Right ventricle myocardium inferior (tissue), 1 donor: ENCODE measurements at regions of chr9 and their contacts with region 1.

Region 1: DNA sequence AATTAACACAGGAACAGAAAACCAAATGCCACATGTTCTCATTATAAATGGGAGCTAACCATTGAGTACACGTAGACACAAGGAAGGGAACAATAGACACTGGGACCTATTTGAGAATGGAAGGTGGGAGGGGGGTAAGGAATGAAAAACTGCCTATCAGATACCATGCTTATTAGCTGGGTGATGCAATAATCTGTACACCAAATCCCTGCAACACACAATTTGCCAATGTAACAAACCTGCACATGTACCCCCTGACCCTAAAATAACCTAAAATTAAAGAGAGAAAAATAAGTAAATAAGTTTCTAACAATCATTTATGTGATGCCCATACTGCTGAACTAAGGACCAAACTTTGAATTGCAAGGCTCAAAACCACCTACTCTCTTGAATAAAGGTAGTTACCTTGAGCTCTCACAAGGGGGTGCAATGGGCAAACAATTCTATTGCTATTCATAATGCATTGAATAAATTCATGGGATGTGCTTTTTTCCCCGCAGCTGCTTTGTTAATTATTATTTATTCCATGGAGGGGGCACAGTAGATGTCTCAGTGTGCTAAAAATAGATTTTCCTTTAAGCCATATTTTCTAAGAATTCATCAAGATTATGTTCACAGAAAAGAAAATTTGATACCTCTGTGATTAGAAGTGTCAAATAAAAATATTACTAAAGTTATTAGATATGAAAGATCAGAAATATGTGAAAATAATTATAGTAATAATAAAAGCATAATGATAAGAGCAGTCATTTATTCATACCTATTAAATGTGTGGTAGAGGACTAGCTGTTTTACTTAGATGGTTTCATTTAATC is 76.2 kb upstream of the PTPN3 start:
- DNase-seq: no peak
- ATAC-seq: peak; percentile 64

Region 2: DNA sequence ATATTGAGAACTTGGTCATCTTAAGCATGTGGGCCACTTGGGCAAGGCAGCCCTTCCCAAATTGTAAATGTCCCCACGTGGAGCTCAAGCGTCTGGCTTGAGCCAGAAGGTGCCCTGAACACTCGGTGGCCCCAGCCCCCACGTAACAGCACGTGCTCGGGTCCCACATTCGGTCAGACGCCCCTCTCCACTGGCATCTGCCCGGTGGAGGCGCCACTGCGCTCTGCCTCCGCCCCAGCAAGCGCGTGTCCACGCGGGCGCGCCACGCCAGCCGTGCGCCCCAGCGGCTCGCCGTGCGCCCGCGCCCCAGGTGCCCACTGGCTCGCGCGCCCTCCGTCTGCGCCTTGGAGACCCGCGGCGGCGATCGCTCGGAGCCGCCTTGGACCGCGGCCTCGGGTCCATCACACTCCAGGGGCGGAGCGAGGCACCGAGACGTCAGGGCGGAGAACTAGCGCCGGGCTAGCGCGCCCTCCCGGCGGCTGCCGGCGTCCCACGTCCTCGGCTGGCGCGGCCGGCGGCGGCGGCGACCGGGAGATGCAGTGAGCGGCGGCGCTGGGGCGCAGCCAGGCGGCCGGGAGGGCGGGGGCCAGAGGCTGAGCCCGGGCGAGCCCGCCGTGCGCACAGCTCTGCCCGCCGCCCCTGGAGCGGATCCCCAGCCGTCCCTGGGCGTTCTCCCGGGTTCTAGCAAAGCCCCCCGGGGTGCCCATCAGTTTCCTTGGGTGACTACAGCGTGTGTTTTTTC is 205.6 kb after region 1 on chr9 and contains the start of gene PALM2AKAP2:
- intact Hi-C with region 1: loop called (anchors 10 kb)
- DNase-seq: peak; percentile 87
- ATAC-seq: peak; percentile 88
- total RNA-seq, gene PALM2AKAP2: 90.1 TPM

Region 3: DNA sequence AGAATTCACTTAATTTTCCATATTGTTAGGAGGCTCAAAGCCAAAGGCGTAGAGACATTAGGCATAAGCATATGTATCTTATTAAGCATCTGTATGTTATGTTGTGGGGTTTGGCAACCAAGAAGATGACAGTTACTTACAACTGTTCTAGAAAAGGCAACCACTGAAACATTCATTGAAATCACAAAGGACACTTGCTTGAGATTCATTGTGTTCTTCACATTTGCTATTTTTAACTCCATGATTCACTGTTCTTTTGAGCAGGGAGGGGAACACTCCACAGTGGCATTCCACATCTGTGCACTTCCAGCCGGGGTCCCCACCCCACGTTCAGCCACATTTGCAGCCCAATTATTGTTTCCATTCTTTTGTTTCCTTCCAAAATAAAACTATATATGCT is 312.8 kb after region 1 on chr9:
- intact Hi-C with region 1: loop called (anchors 5 kb)
- DNase-seq: no peak
- ATAC-seq: peak; percentile 76

Region 4: DNA sequence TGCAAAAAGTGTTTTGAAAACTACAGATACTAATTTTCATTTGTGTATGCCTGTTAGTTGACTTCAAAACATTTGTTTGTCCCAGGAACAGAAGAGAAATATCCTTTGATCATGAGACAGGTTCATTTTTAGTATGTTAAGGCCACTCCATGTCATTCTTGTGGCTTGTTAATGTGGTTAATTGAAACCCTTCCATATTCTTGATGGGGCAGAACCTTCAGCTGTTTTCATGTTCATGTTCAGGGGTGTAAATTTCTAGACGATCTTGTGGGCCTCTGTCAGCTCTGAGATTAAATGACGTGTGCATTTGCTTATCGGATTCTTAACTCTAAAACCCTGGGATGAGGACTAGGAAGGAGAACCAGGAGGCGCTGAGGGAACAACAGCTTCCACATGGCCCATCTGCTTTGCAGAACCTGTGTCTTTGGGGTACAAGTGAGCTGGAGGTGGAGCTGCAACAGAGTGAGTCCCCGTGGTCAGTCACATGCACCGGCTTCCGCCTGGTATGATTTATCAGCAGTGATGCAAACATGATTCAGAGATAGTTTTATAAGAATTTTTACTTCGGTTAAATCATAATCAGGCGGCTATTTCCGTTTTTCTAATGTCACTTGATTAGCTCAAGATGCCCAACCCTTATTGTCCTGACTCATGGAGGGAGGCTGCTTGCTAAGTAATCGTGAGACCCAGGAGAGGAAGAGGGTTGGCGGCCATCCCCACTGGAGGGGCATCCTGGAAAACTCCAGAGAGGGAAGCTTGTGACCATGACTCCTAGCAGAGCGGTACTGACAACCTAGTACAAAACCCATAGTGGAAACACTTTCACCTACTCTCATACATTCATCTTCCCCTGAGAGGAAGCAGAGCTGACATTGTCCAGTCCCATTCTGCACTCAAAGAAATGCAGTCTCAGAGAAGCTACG is 495.3 kb after region 1 on chr9:
- intact Hi-C with region 1: loop called (anchors 10 kb)
- DNase-seq: no peak
- ATAC-seq: peak; percentile 52